Activated CD8-positive, alpha-beta memory T cell treated with anti-CD3 and anti-CD28 coated beads, Interleukin-2, amount 10 ng/mL, durations not matched to agents 7 days and 5 days (primary cell): ENCODE measurements at regions of chr6 and their contacts with region 1.

Region 1: GRCh38 chr6:44074439-44075136 is 52.7 kb downstream of the MRPL14 start:
- DNase-seq: peak; percentile 86
- ATAC-seq: peak; percentile 62
- H3K4me3 Mint-ChIP-seq: peak overlapping the region; percentile 86
- H3K27ac Mint-ChIP-seq: peak overlapping the region; percentile 86
- H3K4me1 Mint-ChIP-seq: peaks cover 16% of the 10 kb centered on the region
- H3K27me3 Mint-ChIP-seq: peaks cover 29% of the 10 kb centered on the region

Region 2: GRCh38 chr6:43723737-43724295 is 350.8 kb before region 1 on chr6:
- CTCF ChIA-PET with region 1: interaction called, 29 read pairs
- DNase-seq: peak; percentile 82
- ATAC-seq: peak; percentile 80
- H3K4me3 Mint-ChIP-seq: no peak overlapping the region
- H3K27ac Mint-ChIP-seq: no peak overlapping the region
- H3K4me1 Mint-ChIP-seq: peaks cover 29% of the 10 kb centered on the region
- H3K27me3 Mint-ChIP-seq: peaks cover 23% of the 10 kb centered on the region

Region 3: DNA sequence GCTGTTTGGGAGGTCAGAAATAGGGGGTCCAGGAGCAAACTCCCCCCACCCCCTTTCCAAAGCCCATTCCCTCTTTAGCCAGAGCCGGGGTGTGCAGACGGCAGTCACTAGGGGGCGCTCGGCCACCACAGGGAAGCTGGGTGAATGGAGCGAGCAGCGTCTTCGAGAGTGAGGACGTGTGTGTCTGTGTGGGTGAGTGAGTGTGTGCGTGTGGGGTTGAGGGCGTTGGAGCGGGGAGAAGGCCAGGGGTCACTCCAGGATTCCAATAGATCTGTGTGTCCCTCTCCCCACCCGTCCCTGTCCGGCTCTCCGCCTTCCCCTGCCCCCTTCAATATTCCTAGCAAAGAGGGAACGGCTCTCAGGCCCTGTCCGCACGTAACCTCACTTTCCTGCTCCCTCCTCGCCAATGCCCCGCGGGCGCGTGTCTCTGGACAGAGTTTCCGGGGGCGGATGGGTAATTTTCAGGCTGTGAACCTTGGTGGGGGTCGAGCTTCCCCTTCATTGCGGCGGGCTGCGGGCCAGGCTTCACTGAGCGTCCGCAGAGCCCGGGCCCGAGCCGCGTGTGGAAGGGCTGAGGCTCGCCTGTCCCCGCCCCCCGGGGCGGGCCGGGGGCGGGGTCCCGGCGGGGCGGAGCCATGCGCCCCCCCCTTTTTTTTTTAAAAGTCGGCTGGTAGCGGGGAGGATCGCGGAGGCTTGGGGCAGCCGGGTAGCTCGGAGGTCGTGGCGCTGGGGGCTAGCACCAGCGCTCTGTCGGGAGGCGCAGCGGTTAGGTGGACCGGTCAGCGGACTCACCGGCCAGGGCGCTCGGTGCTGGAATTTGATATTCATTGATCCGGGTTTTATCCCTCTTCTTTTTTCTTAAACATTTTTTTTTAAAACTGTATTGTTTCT is 304.8 kb before region 1 on chr6 and contains the start of gene VEGFA:
- CTCF ChIA-PET with region 1: interaction called, 100 read pairs
- DNase-seq: peak; percentile 92
- ATAC-seq: peak; percentile 70
- H3K4me3 Mint-ChIP-seq: peak within 1 kb of the TSS; percentile 94
- H3K27ac Mint-ChIP-seq: peak within 1 kb of the TSS; percentile 84
- H3K4me1 Mint-ChIP-seq: peaks cover 30% of the 10 kb centered on the region
- H3K27me3 Mint-ChIP-seq: peaks cover 6% of the 10 kb centered on the region
- total RNA-seq, gene VEGFA: 27.8 to 29.0 TPM

Region 4: GRCh38 chr6:43774776-43775534 is 299.6 kb before region 1 on chr6:
- CTCF ChIA-PET with region 1: interaction called, 100 read pairs
- DNase-seq: peak; percentile 75
- ATAC-seq: no peak
- H3K4me3 Mint-ChIP-seq: no peak overlapping the region
- H3K27ac Mint-ChIP-seq: no peak overlapping the region
- H3K4me1 Mint-ChIP-seq: peaks cover 36% of the 10 kb centered on the region
- H3K27me3 Mint-ChIP-seq: no peaks in the 10 kb centered on the region

Region 5: DNA sequence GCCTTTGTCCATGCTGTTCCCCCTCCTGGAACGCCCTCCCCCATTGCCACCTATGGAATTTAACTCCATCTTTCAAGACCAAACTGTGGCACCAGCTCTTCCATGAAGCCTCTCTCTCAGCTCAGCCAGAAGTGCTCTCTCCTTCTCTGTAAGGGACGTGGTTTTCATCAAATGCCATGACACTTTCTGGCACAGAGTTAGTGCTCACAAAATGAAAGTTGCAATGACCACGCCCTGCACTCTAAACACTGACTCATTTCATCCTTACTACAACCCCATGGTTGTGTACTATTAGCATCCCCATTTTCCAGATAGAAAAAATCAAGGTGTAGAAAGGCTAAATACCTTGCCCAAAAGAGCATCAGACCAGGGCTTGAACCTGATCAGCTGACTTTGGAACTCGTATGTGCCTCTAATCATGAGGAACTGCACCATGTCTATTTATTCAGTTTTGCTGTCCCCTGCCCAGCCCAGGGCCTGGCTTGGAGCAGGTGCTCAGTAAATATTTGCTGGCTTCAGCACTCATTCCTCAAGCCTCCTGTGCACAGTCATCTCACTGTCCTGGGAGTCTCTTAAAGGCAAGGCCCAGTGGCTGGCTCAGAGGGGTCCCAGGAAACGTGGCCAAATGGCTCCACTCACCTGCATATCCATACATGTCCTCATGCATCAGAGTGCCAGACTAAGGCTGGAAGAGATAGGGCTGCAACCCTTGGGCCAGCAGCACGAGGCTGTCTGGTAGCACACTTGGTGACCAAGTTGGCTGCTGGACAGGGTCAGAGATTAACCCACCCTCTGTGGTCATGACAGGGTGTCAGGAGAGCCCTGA is 25.2 kb before region 1 on chr6:
- CTCF ChIA-PET with region 1: interaction called, 11 read pairs
- DNase-seq: peak; percentile 65
- ATAC-seq: peak; percentile 87
- H3K4me3 Mint-ChIP-seq: no peak overlapping the region
- H3K27ac Mint-ChIP-seq: peak overlapping the region; percentile 67
- H3K4me1 Mint-ChIP-seq: peaks cover 19% of the 10 kb centered on the region
- H3K27me3 Mint-ChIP-seq: peaks cover 6% of the 10 kb centered on the region

Region 6: GRCh38 chr6:44064089-44064947 is 10.3 kb before region 1 on chr6:
- CTCF ChIA-PET with region 1: interaction called, 39 read pairs
- DNase-seq: peak; percentile 56
- ATAC-seq: peak; percentile 56
- H3K4me3 Mint-ChIP-seq: no peak overlapping the region
- H3K27ac Mint-ChIP-seq: no peak overlapping the region
- H3K4me1 Mint-ChIP-seq: peaks cover 9% of the 10 kb centered on the region
- H3K27me3 Mint-ChIP-seq: no peaks in the 10 kb centered on the region

Region 7: GRCh38 chr6:44096612-44097011 is 22.0 kb after region 1 on chr6:
- CTCF ChIA-PET with region 1: interaction called, 16 read pairs
- DNase-seq: peak; percentile 84
- ATAC-seq: peak; percentile 89
- H3K4me3 Mint-ChIP-seq: no peak overlapping the region
- H3K27ac Mint-ChIP-seq: no peak overlapping the region
- H3K4me1 Mint-ChIP-seq: no peaks in the 10 kb centered on the region
- H3K27me3 Mint-ChIP-seq: no peaks in the 10 kb centered on the region

Region 8: DNA sequence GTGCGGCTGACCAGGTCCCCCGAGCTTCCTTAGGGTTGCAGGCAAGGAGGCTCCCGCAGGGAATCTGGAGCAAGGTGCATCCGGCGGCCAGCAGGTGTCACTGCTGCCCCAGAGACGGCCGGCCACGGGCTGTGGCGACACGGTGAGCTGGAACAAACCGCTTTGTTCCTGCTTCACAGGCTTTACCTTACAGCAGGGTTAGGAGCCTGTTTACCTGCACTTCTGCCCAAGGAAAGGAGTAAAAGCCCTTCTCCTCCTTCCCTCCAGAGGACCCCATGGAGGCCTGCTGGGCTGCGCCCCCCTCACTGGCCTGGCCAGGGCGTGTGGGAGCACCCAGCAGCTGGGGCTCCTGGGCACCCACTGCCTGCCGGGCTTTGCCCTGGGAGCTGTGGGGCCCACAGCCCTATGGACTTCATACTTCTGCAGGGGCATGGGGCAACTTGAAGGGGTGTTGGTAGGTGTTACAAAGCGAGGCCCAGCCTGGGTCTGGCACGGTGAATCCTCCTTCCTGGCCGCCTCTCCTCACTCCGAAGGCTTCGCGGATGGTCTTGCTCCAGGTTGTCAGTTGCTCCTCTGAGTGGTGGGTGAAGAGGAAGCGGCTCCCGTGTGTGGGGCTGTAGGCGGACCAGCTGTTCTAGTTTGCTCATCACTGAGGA is 401.3 kb after region 1 on chr6:
- CTCF ChIA-PET with region 1: no interaction called
- DNase-seq: peak; percentile 77
- ATAC-seq: peak; percentile 91
- H3K4me3 Mint-ChIP-seq: no peak overlapping the region
- H3K27ac Mint-ChIP-seq: no peak overlapping the region
- H3K4me1 Mint-ChIP-seq: peaks cover 7% of the 10 kb centered on the region
- H3K27me3 Mint-ChIP-seq: peaks cover 17% of the 10 kb centered on the region